Spleen (tissue), 13 donors: ENCODE measurements at regions of chr5 and their contacts with region 1.

Region 1: DNA sequence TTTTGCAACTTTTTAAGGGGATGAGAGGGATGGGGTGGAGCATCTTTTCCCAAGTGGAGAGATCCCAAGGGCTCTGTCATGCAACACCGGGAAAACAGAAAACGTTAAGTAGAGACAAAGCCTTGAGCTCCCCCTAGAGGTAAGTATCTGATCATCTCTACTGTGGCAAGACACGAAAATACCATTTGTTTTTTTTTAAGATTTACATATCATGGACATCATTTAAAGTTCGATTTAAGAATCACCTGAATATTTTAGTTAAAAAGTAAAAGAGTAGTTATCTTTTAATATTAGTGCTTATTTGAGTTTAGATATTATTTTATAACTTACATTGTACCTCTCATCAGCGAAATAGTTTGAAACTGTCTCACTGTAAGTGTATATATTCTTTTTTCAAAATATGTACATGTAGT is 200.4 kb downstream of the LRRC70 start:
- DNase-seq: no peak
- H3K4me3 ChIP-seq: peak overlapping the region in 1 of 8 donors; percentile 18
- H3K27ac ChIP-seq: no peak overlapping the region
- H3K4me1 ChIP-seq: peaks cover 0 to 14% (median 5%) of the 10 kb centered on the region in 6 donors
- H3K27me3 ChIP-seq: no peaks in the 10 kb centered on the region
- CTCF ChIP-seq: peak in 10 of 11 experiments; percentile 22 to 77 (median 64)
- POLR2A ChIP-seq: no peak

Region 2: GRCh38 chr5:62460578-62460983 is 318.4 kb before region 1 on chr5:
- intact Hi-C with region 1: loop called (anchors 5 kb)
- DNase-seq: no peak
- H3K4me3 ChIP-seq: no peak overlapping the region
- H3K27ac ChIP-seq: no peak overlapping the region
- H3K4me1 ChIP-seq: peaks cover 0 to 5% (median 1%) of the 10 kb centered on the region in 6 donors
- H3K27me3 ChIP-seq: no peaks in the 10 kb centered on the region
- CTCF ChIP-seq: peak; percentile 21 to 88 (median 68)
- POLR2A ChIP-seq: no peak

Region 3: GRCh38 chr5:62661126-62661525 is 117.9 kb before region 1 on chr5:
- intact Hi-C with region 1: no loop called
- DNase-seq: no peak
- H3K4me3 ChIP-seq: no peak overlapping the region
- H3K27ac ChIP-seq: no peak overlapping the region
- H3K4me1 ChIP-seq: no peaks in the 10 kb centered on the region
- H3K27me3 ChIP-seq: no peaks in the 10 kb centered on the region
- CTCF ChIP-seq: no peak
- POLR2A ChIP-seq: no peak

Region 4: DNA sequence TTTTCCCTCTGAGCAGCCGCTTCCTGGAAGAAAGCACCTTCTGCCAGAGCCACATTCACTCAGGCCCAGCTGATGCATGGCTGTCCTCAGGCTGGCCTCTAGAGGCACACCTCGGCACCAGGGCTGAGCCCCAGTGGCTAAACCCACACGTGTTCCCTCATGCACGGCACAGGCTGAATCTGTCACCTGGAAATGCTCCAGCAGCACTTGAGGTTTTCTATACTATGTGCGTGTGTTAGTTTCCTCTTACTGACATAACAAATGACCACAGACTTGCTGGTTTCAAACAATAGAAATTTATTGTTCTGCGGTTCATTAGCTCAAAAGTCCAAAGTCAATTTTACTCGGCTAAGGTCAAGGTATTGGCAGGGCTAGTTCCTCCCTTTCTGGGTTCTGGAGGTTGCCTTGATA is 59.0 kb before region 1 on chr5:
- intact Hi-C with region 1: no loop called
- DNase-seq: no peak
- H3K4me3 ChIP-seq: no peak overlapping the region
- H3K27ac ChIP-seq: no peak overlapping the region
- H3K4me1 ChIP-seq: peaks cover 0 to 8% (median 4%) of the 10 kb centered on the region in 6 donors
- H3K27me3 ChIP-seq: peaks cover 0 to 4% (median 0%) of the 10 kb centered on the region in 7 donors
- CTCF ChIP-seq: peak in 7 of 11 experiments; percentile 13 to 37 (median 28)
- POLR2A ChIP-seq: no peak